CD4-positive, alpha-beta T cell (primary cell): ENCODE measurements at regions of chr4 and their contacts with region 1.

Region 1: DNA sequence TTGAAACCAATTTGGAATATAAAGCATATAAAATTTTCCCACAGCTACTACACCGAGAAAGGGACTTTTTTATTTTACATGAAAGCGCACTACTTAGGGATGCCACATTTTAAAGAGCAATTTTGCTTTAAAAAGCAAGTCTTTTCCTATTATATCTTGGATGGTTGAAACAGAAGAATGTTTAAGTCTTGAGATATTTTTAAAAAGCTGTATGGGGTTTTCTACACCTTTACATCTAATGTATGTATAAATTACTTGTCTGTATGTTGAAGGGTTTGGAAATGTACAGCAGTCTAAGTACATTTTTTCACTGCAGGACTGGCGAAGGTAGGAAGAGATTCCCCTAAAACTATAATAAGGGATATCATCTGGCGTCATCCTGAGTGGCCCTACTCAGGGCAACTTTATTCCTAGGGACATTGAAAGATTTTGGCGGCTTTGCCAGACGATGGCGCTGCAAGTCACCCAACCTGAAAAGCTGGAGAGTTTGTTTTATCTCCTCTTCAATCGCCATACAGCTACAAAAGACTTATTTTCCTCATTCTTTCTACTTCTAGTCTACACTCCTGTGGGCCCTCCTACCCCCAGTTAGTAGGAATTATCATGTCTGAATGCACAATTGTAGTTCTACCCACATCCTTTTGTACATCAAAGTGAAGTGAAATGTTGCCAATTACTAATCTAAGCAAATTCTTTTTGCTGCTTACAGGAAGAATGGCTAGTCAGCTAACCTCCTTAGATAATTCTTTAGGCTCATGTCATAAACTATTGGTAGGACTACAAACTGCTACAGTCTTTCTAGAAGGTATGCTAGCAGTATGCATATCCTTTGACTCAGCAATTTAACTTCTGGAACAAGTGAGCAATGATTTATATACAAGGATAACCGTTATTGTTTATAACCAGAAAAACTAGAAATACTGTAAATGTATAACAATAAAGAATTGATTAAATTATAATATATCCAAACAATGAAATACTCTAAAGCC is 782 bp upstream of the NEK1 start:
- DNase-seq: peak; percentile 47 to 87 (median 66)
- ATAC-seq: peak; percentile 47
- H3K4me3 ChIP-seq: peak overlapping the region; percentile 83
- H3K4me3 Mint-ChIP-seq: peak overlapping the region; percentile 98
- H3K27ac ChIP-seq: peak overlapping the region; percentile 98
- H3K27ac Mint-ChIP-seq: peak overlapping the region; percentile 100
- H3K4me1 ChIP-seq: peaks cover 17% of the 10 kb centered on the region
- H3K4me1 Mint-ChIP-seq: peaks cover 46% of the 10 kb centered on the region
- H3K27me3 ChIP-seq: no peaks in the 10 kb centered on the region
- H3K27me3 Mint-ChIP-seq: no peaks in the 10 kb centered on the region
- CTCF ChIP-seq: peak; percentile 90

Region 2: DNA sequence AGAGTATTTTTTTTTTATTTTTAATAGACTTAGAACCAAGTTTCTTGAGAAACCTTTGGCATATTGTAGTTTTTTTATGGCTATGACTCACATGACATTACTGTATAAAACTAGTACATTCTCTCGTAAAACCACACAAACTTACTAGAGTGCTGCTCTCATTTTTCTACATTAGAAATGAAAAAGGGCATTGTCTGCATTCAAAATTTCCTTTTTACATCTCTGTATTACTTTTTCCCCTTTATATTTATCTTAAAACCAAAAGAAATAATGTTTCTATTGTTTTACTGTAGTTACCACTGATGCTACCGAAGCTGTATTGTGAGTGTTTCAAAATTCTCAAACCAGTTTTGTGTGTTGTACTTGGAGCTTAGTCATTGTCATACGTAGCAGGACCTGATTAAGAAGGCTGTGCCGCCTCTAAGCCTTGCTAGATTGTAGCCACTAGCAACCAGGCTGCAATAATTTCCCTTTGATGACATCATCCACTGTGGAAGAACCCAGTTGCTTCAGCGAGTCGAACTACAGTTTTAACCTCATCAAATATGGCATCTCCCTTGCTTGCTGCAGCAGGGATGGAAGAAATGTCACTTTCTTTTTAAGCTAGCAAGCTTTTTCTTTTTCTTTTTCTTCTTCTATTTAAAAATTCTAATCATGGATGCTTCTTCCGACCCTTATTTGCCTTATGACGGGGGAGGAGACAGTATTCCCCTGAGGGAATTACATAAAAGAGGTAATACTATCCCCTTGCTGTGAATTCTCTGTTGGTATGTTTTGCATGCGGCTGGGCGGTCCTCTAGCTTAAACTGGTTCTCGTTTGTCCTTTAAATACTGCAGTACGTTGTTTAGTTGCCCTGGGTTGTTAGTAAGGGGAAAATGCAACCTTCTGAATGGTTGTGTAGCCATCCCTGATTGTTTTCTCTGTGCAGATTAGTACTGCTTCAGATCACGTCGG is 46.8 kb after region 1 on chr4:
- CTCF ChIA-PET with region 1: interaction called, 22 read pairs
- POLR2A ChIA-PET with region 1: interaction called, 10 read pairs
- intact Hi-C with region 1: loop called in 1 of 2 experiments (anchors 2 kb)
- DNase-seq: peak; percentile 21 to 92 (median 46)
- ATAC-seq: peak; percentile 97
- H3K4me3 ChIP-seq: peak overlapping the region; percentile 24
- H3K4me3 Mint-ChIP-seq: peak overlapping the region; percentile 74
- H3K27ac ChIP-seq: peak overlapping the region; percentile 22 to 36
- H3K27ac Mint-ChIP-seq: peak overlapping the region; percentile 81
- H3K4me1 ChIP-seq: peaks cover 5% of the 10 kb centered on the region
- H3K4me1 Mint-ChIP-seq: peaks cover 33% of the 10 kb centered on the region
- H3K27me3 ChIP-seq: no peaks in the 10 kb centered on the region
- H3K27me3 Mint-ChIP-seq: no peaks in the 10 kb centered on the region
- CTCF ChIP-seq: no peak

Region 3: DNA sequence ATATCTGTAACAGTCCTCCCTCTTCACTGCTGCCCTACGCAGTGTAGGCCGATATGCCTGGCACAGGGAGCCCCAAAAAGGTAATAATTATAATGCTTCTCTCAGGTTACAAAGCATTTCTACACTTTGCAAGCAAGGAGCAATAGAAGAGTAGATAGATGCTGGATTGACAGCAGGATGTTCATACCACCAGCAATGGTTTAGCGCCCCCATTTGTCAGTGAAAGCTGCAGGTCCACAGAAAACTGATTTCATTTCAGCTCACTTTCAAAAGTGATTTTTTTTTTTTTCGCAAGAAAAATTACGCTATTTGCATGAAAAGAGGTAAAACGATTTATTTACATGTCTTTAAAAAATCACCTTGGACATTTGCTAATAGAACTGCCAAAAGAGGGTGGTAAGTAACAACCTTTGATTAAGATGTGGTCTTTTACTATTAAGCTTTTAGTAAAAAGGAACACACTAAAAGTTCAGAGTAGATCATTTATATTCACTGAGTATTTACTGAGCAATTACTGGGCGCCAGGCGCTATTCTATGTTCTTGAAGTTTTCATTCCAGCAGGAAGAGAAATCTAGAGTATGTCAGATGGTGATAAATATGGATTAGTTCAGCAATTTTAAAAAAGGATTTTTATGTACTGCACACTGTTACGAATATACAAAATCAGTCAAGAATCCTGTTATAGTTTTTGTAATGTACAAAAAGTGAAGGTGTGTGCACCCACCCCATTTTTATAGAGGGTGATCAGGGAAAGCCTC is 110.2 kb after region 1 on chr4:
- CTCF ChIA-PET with region 1: interaction called, 9 read pairs
- POLR2A ChIA-PET with region 1: interaction called, 3 read pairs
- intact Hi-C with region 1: loop called in 1 of 2 experiments (anchors 5 kb)
- DNase-seq: peak in 5 of 14 experiments; percentile 4 to 26 (median 21)
- ATAC-seq: no peak
- H3K4me3 ChIP-seq: no peak overlapping the region
- H3K4me3 Mint-ChIP-seq: no peak overlapping the region
- H3K27ac ChIP-seq: no peak overlapping the region
- H3K27ac Mint-ChIP-seq: no peak overlapping the region
- H3K4me1 ChIP-seq: no peaks in the 10 kb centered on the region
- H3K4me1 Mint-ChIP-seq: peaks cover 13% of the 10 kb centered on the region
- H3K27me3 ChIP-seq: no peaks in the 10 kb centered on the region
- H3K27me3 Mint-ChIP-seq: no peaks in the 10 kb centered on the region
- CTCF ChIP-seq: no peak

Region 4: GRCh38 chr4:169810325-169811323 is 197.5 kb after region 1 on chr4:
- CTCF ChIA-PET with region 1: interaction called, 10 read pairs
- POLR2A ChIA-PET with region 1: interaction called, 7 read pairs
- intact Hi-C with region 1: loop called (anchors 1 to 5 kb)
- DNase-seq: peak in 6 of 14 experiments; percentile 5 to 73 (median 46)
- ATAC-seq: no peak
- H3K4me3 ChIP-seq: no peak overlapping the region
- H3K4me3 Mint-ChIP-seq: no peak overlapping the region
- H3K27ac ChIP-seq: no peak overlapping the region
- H3K27ac Mint-ChIP-seq: no peak overlapping the region
- H3K4me1 ChIP-seq: no peaks in the 10 kb centered on the region
- H3K4me1 Mint-ChIP-seq: no peaks in the 10 kb centered on the region
- H3K27me3 ChIP-seq: peaks cover 0 to 7% of the 10 kb centered on the region in 2 experiments
- H3K27me3 Mint-ChIP-seq: peaks cover 6% of the 10 kb centered on the region
- CTCF ChIP-seq: peak; percentile 81

Region 5: GRCh38 chr4:170047771-170048354 is 434.7 kb after region 1 on chr4:
- CTCF ChIA-PET with region 1: no interaction called
- POLR2A ChIA-PET with region 1: no interaction called
- intact Hi-C with region 1: loop called (anchors 2 to 5 kb)
- DNase-seq: peak; percentile 27 to 79 (median 46)
- ATAC-seq: no peak
- H3K4me3 ChIP-seq: no peak overlapping the region
- H3K4me3 Mint-ChIP-seq: no peak overlapping the region
- H3K27ac ChIP-seq: no peak overlapping the region
- H3K27ac Mint-ChIP-seq: no peak overlapping the region
- H3K4me1 ChIP-seq: no peaks in the 10 kb centered on the region
- H3K4me1 Mint-ChIP-seq: no peaks in the 10 kb centered on the region
- H3K27me3 ChIP-seq: no peaks in the 10 kb centered on the region
- H3K27me3 Mint-ChIP-seq: peaks cover 5% of the 10 kb centered on the region
- CTCF ChIP-seq: peak; percentile 89